GM12878 (cell line): ENCODE measurements at regions of chr2 and their contacts with region 1.

Region 1: GRCh38 chr2:230668184-230668938 is 44.3 kb upstream of the CAB39 start:
- DNase-seq: peak; percentile 88
- ATAC-seq: peak; percentile 70
- H3K4me3 ChIP-seq: no peak overlapping the region
- H3K27ac ChIP-seq: peak overlapping the region; percentile 92
- H3K4me1 ChIP-seq: peaks cover 73% of the 10 kb centered on the region
- H3K27me3 ChIP-seq: no peaks in the 10 kb centered on the region
- CTCF ChIP-seq: no peak
- EP300 ChIP-seq: peak; percentile 90 to 92
- POLR2A ChIP-seq: peak; percentile 41
- RAD21 ChIP-seq: peak; percentile 10; the same call in 1 of the 2 replicates

Region 2: DNA sequence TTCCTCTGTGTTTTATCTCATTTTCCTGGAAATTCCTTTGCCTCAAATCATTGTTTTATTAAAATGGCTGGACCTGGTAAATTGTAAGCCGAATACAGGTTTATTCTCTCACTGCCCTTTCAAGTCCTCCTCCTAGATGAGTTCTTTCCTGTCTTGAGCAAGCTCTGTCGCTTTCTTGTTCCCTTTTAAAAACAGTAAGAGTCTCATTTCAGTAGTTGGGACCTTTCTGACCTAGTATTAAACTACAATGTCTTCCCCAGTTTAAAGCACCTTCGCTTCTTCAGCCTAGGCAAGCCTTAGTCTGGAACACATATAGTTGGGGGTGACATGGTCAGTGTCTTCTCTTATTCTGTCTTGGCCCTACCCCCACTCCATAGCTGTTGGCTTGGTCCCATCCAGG is 382.3 kb before region 1 on chr2:
- CTCF ChIA-PET with region 1: no interaction called
- POLR2A ChIA-PET with region 1: no interaction called
- RAD21 ChIA-PET with region 1: no interaction called
- SMC1A ChIA-PET with region 1: no interaction called
- in situ Hi-C with region 1: no loop called
- intact Hi-C with region 1: no loop called
- DNase-seq: no peak
- ATAC-seq: no peak
- H3K4me3 ChIP-seq: no peak overlapping the region
- H3K27ac ChIP-seq: no peak overlapping the region
- H3K4me1 ChIP-seq: peaks cover 9% of the 10 kb centered on the region
- H3K27me3 ChIP-seq: no peaks in the 10 kb centered on the region
- CTCF ChIP-seq: no peak
- EP300 ChIP-seq: no peak
- POLR2A ChIP-seq: no peak
- RAD21 ChIP-seq: no peak

Region 3: DNA sequence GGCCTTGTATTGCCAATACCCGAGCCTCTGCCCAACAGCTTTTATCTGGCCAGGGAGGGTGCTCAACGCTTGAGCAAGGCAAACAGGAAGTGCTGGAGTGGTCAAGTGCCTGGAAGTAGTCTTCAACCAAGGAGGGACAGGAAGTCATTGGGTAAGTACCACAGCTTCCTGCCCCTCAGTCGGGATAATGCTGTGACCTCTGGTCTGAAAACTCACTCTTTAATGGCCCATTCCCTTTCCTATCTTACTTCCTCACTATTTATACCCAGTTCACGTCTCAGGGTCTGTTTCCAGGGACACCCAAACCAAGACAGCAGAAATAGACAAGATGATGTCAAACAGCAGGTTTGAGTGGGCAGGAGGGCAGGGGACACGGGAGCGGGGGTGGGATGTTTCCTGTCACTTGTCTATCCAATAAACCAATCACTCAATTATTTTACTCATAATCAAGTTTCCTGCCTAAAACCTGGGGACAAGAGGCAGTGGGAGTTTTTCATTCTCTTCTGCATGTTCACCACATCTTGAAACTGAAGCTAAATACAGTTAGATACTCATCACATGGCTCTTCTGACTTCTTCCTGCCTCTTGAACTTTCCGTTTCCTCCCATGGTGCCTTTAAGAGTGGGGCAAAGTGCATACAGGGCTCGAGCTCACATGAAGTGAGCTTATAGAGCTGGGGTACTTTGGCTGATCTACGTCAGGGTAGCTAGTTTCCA is 24.6 kb before region 1 on chr2:
- CTCF ChIA-PET with region 1: interaction called, 11 read pairs
- POLR2A ChIA-PET with region 1: interaction called, 23 read pairs
- RAD21 ChIA-PET with region 1: interaction called, 34 read pairs
- SMC1A ChIA-PET with region 1: interaction called, 39 read pairs
- in situ Hi-C with region 1: no loop called
- intact Hi-C with region 1: no loop called
- DNase-seq: no peak
- ATAC-seq: peak; percentile 88
- H3K4me3 ChIP-seq: no peak overlapping the region
- H3K27ac ChIP-seq: peak overlapping the region; percentile 60
- H3K4me1 ChIP-seq: peaks cover 18% of the 10 kb centered on the region
- H3K27me3 ChIP-seq: no peaks in the 10 kb centered on the region
- CTCF ChIP-seq: no peak
- EP300 ChIP-seq: peak in 1 of 2 experiments; percentile 26; a peak in 1 of 4 replicates
- POLR2A ChIP-seq: no peak
- RAD21 ChIP-seq: no peak

Region 4: GRCh38 chr2:230684270-230685168 is 16.2 kb after region 1 on chr2:
- CTCF ChIA-PET with region 1: interaction called, 8 read pairs
- POLR2A ChIA-PET with region 1: interaction called, 4 read pairs
- RAD21 ChIA-PET with region 1: interaction called, 5 read pairs
- SMC1A ChIA-PET with region 1: interaction called, 11 read pairs
- in situ Hi-C with region 1: no loop called
- intact Hi-C with region 1: no loop called
- DNase-seq: no peak
- ATAC-seq: no peak
- H3K4me3 ChIP-seq: no peak overlapping the region
- H3K27ac ChIP-seq: no peak overlapping the region
- H3K4me1 ChIP-seq: no peaks in the 10 kb centered on the region
- H3K27me3 ChIP-seq: no peaks in the 10 kb centered on the region
- CTCF ChIP-seq: no peak
- EP300 ChIP-seq: no peak
- POLR2A ChIP-seq: no peak
- RAD21 ChIP-seq: no peak

Region 5: GRCh38 chr2:230942920-230943896 is 274.8 kb after region 1 on chr2:
- CTCF ChIA-PET with region 1: no interaction called
- POLR2A ChIA-PET with region 1: no interaction called
- RAD21 ChIA-PET with region 1: no interaction called
- SMC1A ChIA-PET with region 1: no interaction called
- in situ Hi-C with region 1: no loop called
- intact Hi-C with region 1: loop called (anchors 10 kb)
- DNase-seq: peak; percentile 82
- ATAC-seq: peak; percentile 79
- H3K4me3 ChIP-seq: peak overlapping the region; percentile 85
- H3K27ac ChIP-seq: peak overlapping the region; percentile 99
- H3K4me1 ChIP-seq: peaks cover 27% of the 10 kb centered on the region
- H3K27me3 ChIP-seq: no peaks in the 10 kb centered on the region
- CTCF ChIP-seq: no peak
- EP300 ChIP-seq: no peak
- POLR2A ChIP-seq: peak; percentile 78
- RAD21 ChIP-seq: no peak

Region 6: DNA sequence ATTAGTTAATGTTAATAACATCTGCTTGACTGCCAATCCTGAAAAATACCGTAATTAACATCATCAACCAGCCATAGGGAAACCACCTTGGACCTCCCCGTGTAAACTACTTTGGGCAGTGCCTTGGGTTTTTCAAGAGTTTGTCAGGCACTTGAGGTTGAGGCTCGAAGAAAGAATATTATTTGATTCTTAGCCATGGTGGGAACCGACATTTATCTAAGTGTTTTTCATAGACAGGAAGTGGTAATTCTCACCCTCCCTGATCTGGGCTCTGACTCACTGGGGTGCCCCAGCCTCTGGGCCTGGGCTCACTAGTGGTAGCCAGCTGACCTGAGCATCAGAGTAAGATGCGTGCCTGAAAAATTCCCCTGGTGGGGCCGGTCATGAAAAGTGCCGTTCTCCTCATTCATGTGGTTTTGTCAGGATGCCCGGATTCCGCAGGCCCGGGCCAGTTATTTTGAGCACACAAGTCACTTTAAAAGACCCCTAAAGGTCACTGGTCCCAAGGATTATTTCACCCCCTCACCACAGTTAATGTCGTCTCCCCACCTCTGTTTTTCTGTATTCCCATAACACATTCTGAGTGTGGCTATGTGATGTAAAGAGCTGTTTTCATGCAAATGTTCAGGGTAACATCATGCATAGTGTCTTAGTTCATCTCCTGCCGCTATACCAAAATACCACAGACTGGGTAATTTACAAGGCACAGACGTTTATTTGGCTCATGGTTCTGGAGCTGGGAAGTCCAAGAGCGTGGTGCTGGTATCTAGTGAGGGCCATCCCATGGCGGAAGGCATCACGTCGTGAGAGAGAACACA is 305.9 kb after region 1 on chr2:
- CTCF ChIA-PET with region 1: no interaction called
- POLR2A ChIA-PET with region 1: no interaction called
- RAD21 ChIA-PET with region 1: no interaction called
- SMC1A ChIA-PET with region 1: no interaction called
- in situ Hi-C with region 1: no loop called
- intact Hi-C with region 1: loop called (anchors 10 kb)
- DNase-seq: peak; percentile 94
- ATAC-seq: peak; percentile 86
- H3K4me3 ChIP-seq: no peak overlapping the region; the same call in 1 of the 2 replicates
- H3K27ac ChIP-seq: peak overlapping the region; percentile 97
- H3K4me1 ChIP-seq: peaks cover 67% of the 10 kb centered on the region
- H3K27me3 ChIP-seq: no peaks in the 10 kb centered on the region
- CTCF ChIP-seq: no peak
- EP300 ChIP-seq: peak; percentile 79 to 94
- POLR2A ChIP-seq: 0 out of 2 replicates have a peak, but pooled peaks have one; percentile 44
- RAD21 ChIP-seq: peak; percentile 35